ENCODE measurements at regions of chr16 and their contacts with region 1.

Region 1: DNA sequence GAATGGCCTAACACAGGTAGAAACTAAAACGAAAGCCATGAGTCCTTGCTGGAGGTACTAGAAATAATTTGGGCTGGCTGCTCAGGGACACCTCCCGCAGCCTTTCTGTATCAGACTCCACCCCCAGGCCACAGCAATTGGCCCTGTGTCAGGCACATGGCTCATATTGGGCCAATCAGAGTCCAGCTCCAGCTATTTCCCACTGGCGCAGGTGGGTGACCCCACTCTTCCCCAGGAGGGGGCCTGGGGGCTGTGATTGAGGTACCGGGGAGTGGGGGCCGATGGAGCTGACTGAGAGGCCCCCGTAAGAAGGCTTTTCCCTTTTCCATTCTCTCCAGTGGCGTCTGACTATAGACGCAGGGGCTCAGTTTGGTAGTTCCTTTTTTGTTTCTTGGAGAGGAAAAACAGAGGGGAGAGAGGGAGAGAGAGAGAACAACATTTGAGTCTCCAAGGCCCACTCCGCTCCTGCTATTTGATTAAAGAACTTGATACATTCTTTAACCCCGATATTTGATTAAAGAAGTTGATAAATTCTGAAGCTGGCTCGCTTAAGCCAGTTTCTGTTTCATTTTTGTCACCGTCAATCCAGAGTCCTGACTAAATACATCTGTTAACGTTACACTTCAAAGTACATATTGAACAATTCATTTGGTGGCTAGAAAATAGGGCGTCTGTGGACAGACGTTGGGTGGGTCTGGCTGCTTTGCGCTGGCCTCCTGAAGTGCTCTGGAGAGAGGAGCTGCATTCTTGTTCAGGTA is 26.3 kb downstream of the FOXL1 start:
- DNase-seq: peak; percentile 48
- H3K4me3 Mint-ChIP-seq: peak overlapping the region; percentile 68
- H3K27ac Mint-ChIP-seq: no peak overlapping the region
- H3K4me1 Mint-ChIP-seq: peaks cover 6% of the 10 kb centered on the region
- H3K27me3 Mint-ChIP-seq: peaks cover 15% of the 10 kb centered on the region

Region 2: GRCh38 chr16:86531191-86531545 is 73.4 kb before region 1 on chr16:
- CTCF ChIA-PET with region 1: no interaction called
- POLR2A ChIA-PET with region 1: no interaction called
- intact Hi-C with region 1: no loop called
- DNase-seq: no peak
- H3K4me3 Mint-ChIP-seq: no peak overlapping the region
- H3K27ac Mint-ChIP-seq: no peak overlapping the region
- H3K4me1 Mint-ChIP-seq: no peaks in the 10 kb centered on the region
- H3K27me3 Mint-ChIP-seq: no peaks in the 10 kb centered on the region

Region 3: DNA sequence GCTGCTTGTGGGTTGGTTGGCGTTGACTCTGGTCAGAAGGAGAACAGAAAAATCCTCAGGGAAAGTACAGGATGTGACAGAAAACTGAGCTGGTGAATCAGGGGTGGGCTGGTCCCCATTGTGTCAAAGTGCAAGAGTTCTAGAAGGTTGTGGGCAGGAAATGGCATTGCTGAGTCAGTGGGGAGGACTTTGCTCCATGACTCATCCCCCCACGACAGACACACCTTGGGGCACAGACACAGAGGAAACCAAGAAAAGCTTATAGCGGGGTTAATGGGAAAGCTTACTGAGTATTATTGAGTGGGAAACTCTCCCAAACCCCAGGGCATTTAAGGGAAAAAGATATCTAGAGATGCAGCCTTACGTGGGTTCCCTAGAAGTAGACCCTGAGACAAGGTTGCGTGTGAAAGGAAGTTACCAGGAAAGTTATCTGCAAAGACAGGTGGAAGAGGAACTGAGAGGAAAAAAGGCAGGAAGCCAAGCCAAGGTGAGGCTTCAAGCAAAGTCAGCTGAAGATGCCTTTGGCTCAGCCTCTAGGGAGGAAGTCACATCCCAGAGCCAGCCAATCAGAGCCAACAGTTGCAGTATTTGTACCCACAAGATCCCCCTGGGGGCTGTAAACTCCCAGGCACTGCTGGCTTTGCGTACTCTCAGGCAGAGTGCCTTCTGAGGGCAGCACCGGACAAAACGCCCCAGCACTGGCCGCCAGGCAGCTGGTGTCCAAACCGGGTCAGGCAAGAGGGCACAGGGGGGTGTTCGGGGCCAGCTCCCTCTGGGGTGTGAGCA is 60.1 kb after region 1 on chr16:
- CTCF ChIA-PET with region 1: no interaction called
- POLR2A ChIA-PET with region 1: no interaction called
- intact Hi-C with region 1: loop called (anchors 2 kb)
- DNase-seq: peak; percentile 87
- H3K4me3 Mint-ChIP-seq: peak overlapping the region; percentile 27
- H3K27ac Mint-ChIP-seq: peak overlapping the region; percentile 83
- H3K4me1 Mint-ChIP-seq: peaks cover 34% of the 10 kb centered on the region
- H3K27me3 Mint-ChIP-seq: peaks cover 32% of the 10 kb centered on the region

Region 4: DNA sequence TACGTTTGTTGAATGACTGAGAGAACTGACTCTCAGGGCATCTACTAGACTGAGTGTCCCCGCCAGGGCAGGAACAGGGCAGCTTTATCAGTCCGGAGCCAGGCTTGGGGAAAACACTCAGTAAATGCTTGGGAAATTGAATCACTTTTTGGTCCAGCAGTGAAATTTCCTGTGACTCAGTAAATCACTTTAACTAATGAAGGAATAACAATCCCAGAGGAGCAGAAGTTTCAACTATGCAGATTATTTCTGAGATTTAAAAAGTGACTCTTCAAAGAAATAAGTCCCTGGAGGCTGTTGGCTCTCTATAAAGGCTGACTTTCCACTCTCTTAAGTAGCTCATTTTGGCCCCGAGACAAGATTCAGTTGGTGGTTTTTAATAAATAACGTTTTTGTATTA is 75.5 kb after region 1 on chr16:
- CTCF ChIA-PET with region 1: no interaction called
- POLR2A ChIA-PET with region 1: no interaction called
- intact Hi-C with region 1: no loop called
- DNase-seq: no peak
- H3K4me3 Mint-ChIP-seq: no peak overlapping the region
- H3K27ac Mint-ChIP-seq: no peak overlapping the region
- H3K4me1 Mint-ChIP-seq: no peaks in the 10 kb centered on the region
- H3K27me3 Mint-ChIP-seq: peaks cover 21% of the 10 kb centered on the region